PC-3 (cell line): ENCODE measurements at regions of chr17 and their contacts with region 1.

Region 1: DNA sequence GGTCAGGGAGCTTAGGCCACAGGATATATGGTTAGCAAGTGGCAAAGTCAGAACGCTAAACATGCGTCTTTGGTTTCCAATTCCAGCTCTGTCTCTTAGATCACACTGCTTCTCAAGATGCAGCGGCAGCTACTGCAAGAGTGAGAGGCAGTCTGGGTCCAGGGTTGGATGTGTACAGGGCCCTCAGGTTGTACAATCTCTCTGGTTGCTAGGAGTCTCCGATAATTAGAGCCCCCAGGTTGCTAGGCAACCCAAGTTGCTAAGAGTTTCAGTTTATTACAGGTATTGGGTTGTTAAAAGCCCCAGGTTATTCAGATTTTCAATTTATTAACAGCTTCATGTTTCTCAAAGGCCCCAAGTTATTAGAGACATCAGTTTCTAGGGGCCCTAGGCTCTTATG is 15.5 kb upstream of the SPACA3 start:
- DNase-seq: no peak
- ATAC-seq: no peak
- H3K4me3 ChIP-seq: no peak overlapping the region
- H3K27ac ChIP-seq: no peak overlapping the region
- H3K4me1 ChIP-seq: no peaks in the 10 kb centered on the region
- H3K27me3 ChIP-seq: no peaks in the 10 kb centered on the region
- CTCF ChIP-seq: no peak

Region 2: DNA sequence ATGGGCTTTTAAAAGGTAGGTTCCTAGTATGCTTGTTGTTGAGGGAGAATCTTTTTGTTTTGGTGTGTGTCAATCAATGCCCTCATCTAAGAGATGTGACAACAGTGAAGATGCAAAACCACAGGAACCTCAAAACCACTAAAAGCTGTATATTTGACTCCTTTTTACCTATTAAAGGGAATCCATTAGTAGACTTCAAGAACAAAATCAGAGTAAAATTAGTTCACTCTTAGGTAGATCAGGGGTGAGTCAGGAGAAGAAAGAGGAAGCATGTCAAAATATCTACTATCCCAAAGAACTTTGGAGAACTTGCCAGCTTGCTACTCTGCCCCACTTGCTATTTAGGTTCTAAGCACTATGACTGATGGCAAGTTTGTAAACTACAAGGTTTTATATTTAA is 400.3 kb before region 1 on chr17:
- CTCF ChIA-PET with region 1: no interaction called
- POLR2A ChIA-PET with region 1: interaction called, 12 read pairs
- intact Hi-C with region 1: no loop called
- DNase-seq: no peak
- ATAC-seq: no peak
- H3K4me3 ChIP-seq: no peak overlapping the region
- H3K27ac ChIP-seq: no peak overlapping the region
- H3K4me1 ChIP-seq: no peaks in the 10 kb centered on the region
- H3K27me3 ChIP-seq: no peaks in the 10 kb centered on the region
- CTCF ChIP-seq: no peak